ENCODE measurements at regions of chr20 and their contacts with region 1.

Region 1: GRCh38 chr20:47663333-47664067 is 121.8 kb downstream of the SULF2 start:
- DNase-seq: peak; percentile 59 to 83 (median 72)
- ATAC-seq: peak; percentile 87
- H3K4me3 ChIP-seq: no peak overlapping the region
- H3K4me3 Mint-ChIP-seq: no peak overlapping the region
- H3K27ac ChIP-seq: no peak overlapping the region
- H3K27ac Mint-ChIP-seq: no peak overlapping the region
- H3K4me1 ChIP-seq: no peaks in the 10 kb centered on the region
- H3K4me1 Mint-ChIP-seq: peaks cover 3% of the 10 kb centered on the region
- H3K27me3 ChIP-seq: no peaks in the 10 kb centered on the region
- H3K27me3 Mint-ChIP-seq: no peaks in the 10 kb centered on the region
- CTCF ChIP-seq: peak; percentile 87

Region 2: DNA sequence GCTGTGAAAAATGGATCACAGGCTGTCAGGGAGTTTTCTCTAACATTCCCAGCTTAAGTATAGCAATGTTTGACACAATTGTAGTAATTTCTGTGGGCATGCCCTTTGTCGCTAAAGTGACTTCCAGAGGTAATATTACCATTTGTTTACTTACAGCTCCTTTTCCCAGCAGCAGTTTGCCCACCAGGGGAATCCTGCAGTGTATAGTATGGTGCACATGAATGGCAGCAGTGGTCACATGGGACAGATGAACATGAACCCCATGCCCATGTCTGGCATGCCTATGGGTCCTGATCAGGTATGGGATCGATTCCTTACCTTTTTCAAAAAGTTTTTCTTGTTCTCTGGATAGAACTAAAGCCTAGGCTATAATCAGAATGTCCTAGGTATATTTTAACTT is 10.7 kb before region 1 on chr20:
- CTCF ChIA-PET with region 1: interaction called, 11 read pairs
- POLR2A ChIA-PET with region 1: no interaction called
- intact Hi-C with region 1: no loop called
- DNase-seq: no peak
- ATAC-seq: no peak
- H3K4me3 ChIP-seq: no peak overlapping the region
- H3K4me3 Mint-ChIP-seq: no peak overlapping the region
- H3K27ac ChIP-seq: no peak overlapping the region
- H3K27ac Mint-ChIP-seq: no peak overlapping the region
- H3K4me1 ChIP-seq: no peaks in the 10 kb centered on the region
- H3K4me1 Mint-ChIP-seq: no peaks in the 10 kb centered on the region
- H3K27me3 ChIP-seq: no peaks in the 10 kb centered on the region
- H3K27me3 Mint-ChIP-seq: no peaks in the 10 kb centered on the region
- CTCF ChIP-seq: no peak

Region 3: GRCh38 chr20:47677635-47678453 is 14.3 kb after region 1 on chr20:
- CTCF ChIA-PET with region 1: interaction called, 20 read pairs
- POLR2A ChIA-PET with region 1: no interaction called
- intact Hi-C with region 1: no loop called
- DNase-seq: peak; percentile 16 to 69 (median 54)
- ATAC-seq: peak; percentile 68
- H3K4me3 ChIP-seq: no peak overlapping the region
- H3K4me3 Mint-ChIP-seq: no peak overlapping the region
- H3K27ac ChIP-seq: no peak overlapping the region
- H3K27ac Mint-ChIP-seq: no peak overlapping the region
- H3K4me1 ChIP-seq: peaks cover 4% of the 10 kb centered on the region
- H3K4me1 Mint-ChIP-seq: peaks cover 3% of the 10 kb centered on the region
- H3K27me3 ChIP-seq: no peaks in the 10 kb centered on the region
- H3K27me3 Mint-ChIP-seq: no peaks in the 10 kb centered on the region
- CTCF ChIP-seq: peak; percentile 67

Measured in CD8-positive, alpha-beta T cell (primary cell).